Activated CD8-positive, alpha-beta T cell treated with anti-CD3 and anti-CD28 coated beads for 36 hours (primary cell): ENCODE measurements at regions of chr6 and their contacts with region 1.

Region 1: GRCh38 chr6:30600451-30600961 is 16.5 kb downstream of the PPP1R10 start:
- DNase-seq: no peak
- ATAC-seq: no peak
- H3K4me3 Mint-ChIP-seq: no peak overlapping the region
- H3K27ac Mint-ChIP-seq: peak overlapping the region; percentile 25
- H3K4me1 Mint-ChIP-seq: peaks cover 12% of the 10 kb centered on the region
- H3K27me3 Mint-ChIP-seq: no peaks in the 10 kb centered on the region
- CTCF ChIP-seq: no peak

Region 2: GRCh38 chr6:30453508-30454116 is 146.9 kb before region 1 on chr6:
- CTCF ChIA-PET with region 1: interaction called, 22 read pairs
- POLR2A ChIA-PET with region 1: no interaction called
- intact Hi-C with region 1: no loop called
- DNase-seq: peak; percentile 95
- ATAC-seq: peak; percentile 91
- H3K4me3 Mint-ChIP-seq: no peak overlapping the region
- H3K27ac Mint-ChIP-seq: no peak overlapping the region
- H3K4me1 Mint-ChIP-seq: peaks cover 29% of the 10 kb centered on the region
- H3K27me3 Mint-ChIP-seq: peaks cover 82% of the 10 kb centered on the region
- CTCF ChIP-seq: peak; percentile 70

Region 3: GRCh38 chr6:30489081-30490025 is 111.2 kb before region 1 on chr6 and contains the start of gene HLA-E:
- CTCF ChIA-PET with region 1: interaction called, 115 read pairs
- POLR2A ChIA-PET with region 1: interaction called, 6 read pairs
- intact Hi-C with region 1: loop called (anchors 5 kb)
- DNase-seq: peak; percentile 94
- ATAC-seq: peak; percentile 75
- H3K4me3 Mint-ChIP-seq: peak within 1 kb of the TSS; percentile 97
- H3K27ac Mint-ChIP-seq: peak within 1 kb of the TSS; percentile 98
- H3K4me1 Mint-ChIP-seq: peaks cover 38% of the 10 kb centered on the region
- H3K27me3 Mint-ChIP-seq: no peaks in the 10 kb centered on the region
- CTCF ChIP-seq: no peak
- total RNA-seq, gene HLA-E: 493 to 499 TPM

Region 4: GRCh38 chr6:30548375-30548774 is 52.1 kb before region 1 on chr6:
- CTCF ChIA-PET with region 1: interaction called, 91 read pairs
- POLR2A ChIA-PET with region 1: interaction called, 3 read pairs
- intact Hi-C with region 1: no loop called
- DNase-seq: no peak
- ATAC-seq: no peak
- H3K4me3 Mint-ChIP-seq: no peak overlapping the region
- H3K27ac Mint-ChIP-seq: peak overlapping the region; percentile 12
- H3K4me1 Mint-ChIP-seq: peaks cover 18% of the 10 kb centered on the region
- H3K27me3 Mint-ChIP-seq: no peaks in the 10 kb centered on the region
- CTCF ChIP-seq: no peak

Region 5: DNA sequence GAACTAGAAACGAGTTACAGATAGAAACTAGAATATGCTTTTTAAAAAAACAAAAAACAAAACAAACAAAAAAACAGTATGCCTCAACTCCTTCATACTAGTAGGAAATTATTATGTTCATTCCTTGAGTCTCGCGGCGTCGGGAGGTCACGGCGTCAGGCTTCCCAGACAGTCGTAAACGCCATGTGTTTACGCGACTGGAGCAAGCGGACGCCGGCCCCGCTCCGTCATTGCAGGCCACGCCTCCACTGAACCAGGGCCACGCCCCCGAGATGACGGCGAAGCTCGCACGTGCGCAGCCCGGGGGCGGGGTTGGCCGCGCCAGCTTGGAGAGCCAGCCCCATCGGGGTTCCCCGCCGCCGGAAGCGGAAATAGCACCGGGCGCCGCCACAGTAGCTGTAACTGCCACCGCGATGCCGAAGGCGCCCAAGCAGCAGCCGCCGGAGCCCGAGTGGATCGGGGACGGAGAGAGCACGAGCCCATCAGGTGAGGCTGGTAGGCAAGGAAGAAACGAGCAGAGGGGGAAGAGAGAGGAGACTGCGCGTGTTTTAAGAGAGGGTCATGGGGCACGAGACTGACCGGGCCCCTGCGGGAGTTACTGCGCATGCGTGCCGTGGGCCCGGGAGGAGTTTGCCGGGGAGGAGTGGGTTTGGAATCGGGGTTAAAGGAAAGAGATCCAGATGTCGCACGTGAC is 29.3 kb before region 1 on chr6 and contains the start of gene ABCF1:
- CTCF ChIA-PET with region 1: interaction called, 19 read pairs
- POLR2A ChIA-PET with region 1: interaction called, 15 read pairs
- intact Hi-C with region 1: no loop called
- DNase-seq: peak; percentile 99
- ATAC-seq: peak; percentile 92
- H3K4me3 Mint-ChIP-seq: peak within 1 kb of the TSS; percentile 86
- H3K27ac Mint-ChIP-seq: peak within 1 kb of the TSS; percentile 96
- H3K4me1 Mint-ChIP-seq: peaks cover 63% of the 10 kb centered on the region
- H3K27me3 Mint-ChIP-seq: no peaks in the 10 kb centered on the region
- CTCF ChIP-seq: no peak
- total RNA-seq, gene ABCF1: 86.9 to 88.0 TPM

Region 6: GRCh38 chr6:30583921-30584320 is 16.6 kb before region 1 on chr6:
- CTCF ChIA-PET with region 1: interaction called, 22 read pairs
- POLR2A ChIA-PET with region 1: interaction called, 75 read pairs
- intact Hi-C with region 1: no loop called
- DNase-seq: no peak
- ATAC-seq: no peak
- H3K4me3 Mint-ChIP-seq: no peak overlapping the region
- H3K27ac Mint-ChIP-seq: no peak overlapping the region
- H3K4me1 Mint-ChIP-seq: peaks cover 2% of the 10 kb centered on the region
- H3K27me3 Mint-ChIP-seq: no peaks in the 10 kb centered on the region
- CTCF ChIP-seq: no peak

Region 7: DNA sequence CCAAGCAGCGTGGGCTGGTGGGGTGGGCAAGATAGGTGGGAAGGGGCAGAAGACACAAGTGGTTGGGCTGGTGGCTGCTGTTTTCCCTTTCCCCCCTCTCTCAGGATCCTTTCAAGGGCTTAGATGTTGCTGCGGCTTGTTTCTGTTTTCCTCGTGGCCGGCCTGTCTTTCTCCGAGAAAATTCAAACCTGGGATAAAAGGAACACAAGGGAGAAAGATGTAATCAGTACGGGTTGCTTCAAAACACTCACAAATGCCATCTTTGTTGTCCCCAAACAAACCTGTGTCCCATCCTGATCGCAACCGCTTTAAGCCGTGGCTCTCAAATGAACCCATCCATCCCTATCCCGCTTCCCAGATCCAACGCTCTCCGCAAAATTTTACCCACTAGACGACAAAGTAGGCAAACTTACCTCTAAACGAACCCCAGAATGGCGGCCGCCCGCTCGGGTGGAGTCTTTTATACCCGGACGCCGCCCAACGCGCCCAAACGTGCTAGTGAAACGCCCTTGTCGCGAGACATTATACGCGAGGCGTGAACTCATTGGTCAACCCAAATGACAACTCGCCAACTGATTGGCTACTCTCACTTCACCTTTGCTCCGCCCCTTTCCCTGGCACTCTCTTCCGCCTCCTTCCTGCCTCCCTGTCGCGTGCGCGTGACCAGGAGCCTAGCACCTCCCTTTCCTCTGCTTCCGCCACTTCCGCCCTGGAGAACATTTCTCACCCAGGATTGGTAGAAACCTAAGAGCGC is 16.5 kb after region 1 on chr6 and contains the start of gene PPP1R10:
- CTCF ChIA-PET with region 1: interaction called, 48 read pairs
- POLR2A ChIA-PET with region 1: interaction called, 121 read pairs
- intact Hi-C with region 1: no loop called
- DNase-seq: peak; percentile 99
- ATAC-seq: peak; percentile 82
- H3K4me3 Mint-ChIP-seq: peak within 1 kb of the TSS; percentile 95
- H3K27ac Mint-ChIP-seq: peak within 1 kb of the TSS; percentile 98
- H3K4me1 Mint-ChIP-seq: peaks cover 39% of the 10 kb centered on the region
- H3K27me3 Mint-ChIP-seq: no peaks in the 10 kb centered on the region
- CTCF ChIP-seq: no peak
- total RNA-seq, gene PPP1R10: 59.0 to 59.8 TPM